ENCODE measurements at regions of chrX and their contacts with region 1.

Region 1: GRCh38 chrX:72169008-72169728 is 12.4 kb upstream of the PIN4 start:
- DNase-seq: peak; percentile 45
- ATAC-seq: peak; percentile 89
- H3K4me3 Mint-ChIP-seq: peak overlapping the region; percentile 65
- H3K27ac Mint-ChIP-seq: peak overlapping the region; percentile 89
- H3K4me1 Mint-ChIP-seq: peaks cover 5% of the 10 kb centered on the region
- H3K27me3 Mint-ChIP-seq: no peaks in the 10 kb centered on the region
- CTCF ChIP-seq: no peak

Region 2: DNA sequence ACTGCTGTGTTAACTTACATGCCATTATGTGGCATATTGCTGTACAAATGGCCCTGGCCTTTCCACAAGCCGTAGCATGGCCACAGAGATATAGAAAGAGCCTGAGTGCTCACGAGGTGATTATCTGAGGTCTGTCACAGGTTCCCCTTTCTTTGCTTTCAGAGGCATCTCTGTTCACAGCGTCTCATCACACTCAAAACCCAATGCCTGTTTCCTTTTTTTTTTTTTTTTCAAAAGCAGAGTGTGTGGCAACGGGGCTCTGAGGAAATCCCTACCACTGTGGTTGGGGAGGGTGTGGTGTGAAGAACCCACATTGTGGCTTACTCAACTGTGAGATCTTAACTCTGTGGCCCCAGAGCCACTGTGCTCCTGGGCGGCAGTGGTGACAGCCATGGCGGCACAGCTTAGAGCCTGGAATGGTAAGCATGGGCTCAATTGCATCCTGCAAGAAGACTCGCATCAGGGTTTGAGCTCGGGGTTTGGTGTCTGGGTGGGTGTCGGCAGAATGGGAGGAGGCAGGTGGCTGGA is 68.3 kb before region 1 on chrX:
- CTCF ChIA-PET with region 1: no interaction called
- POLR2A ChIA-PET with region 1: no interaction called
- intact Hi-C with region 1: loop called (anchors 10 kb)
- DNase-seq: peak; percentile 83
- ATAC-seq: peak; percentile 73
- H3K4me3 Mint-ChIP-seq: no peak overlapping the region
- H3K27ac Mint-ChIP-seq: no peak overlapping the region
- H3K4me1 Mint-ChIP-seq: peaks cover 44% of the 10 kb centered on the region
- H3K27me3 Mint-ChIP-seq: peaks cover 32% of the 10 kb centered on the region
- CTCF ChIP-seq: no peak